Sigmoid colon (tissue), 7 donors: ENCODE measurements at regions of chr1 and their contacts with region 1.

Region 1: DNA sequence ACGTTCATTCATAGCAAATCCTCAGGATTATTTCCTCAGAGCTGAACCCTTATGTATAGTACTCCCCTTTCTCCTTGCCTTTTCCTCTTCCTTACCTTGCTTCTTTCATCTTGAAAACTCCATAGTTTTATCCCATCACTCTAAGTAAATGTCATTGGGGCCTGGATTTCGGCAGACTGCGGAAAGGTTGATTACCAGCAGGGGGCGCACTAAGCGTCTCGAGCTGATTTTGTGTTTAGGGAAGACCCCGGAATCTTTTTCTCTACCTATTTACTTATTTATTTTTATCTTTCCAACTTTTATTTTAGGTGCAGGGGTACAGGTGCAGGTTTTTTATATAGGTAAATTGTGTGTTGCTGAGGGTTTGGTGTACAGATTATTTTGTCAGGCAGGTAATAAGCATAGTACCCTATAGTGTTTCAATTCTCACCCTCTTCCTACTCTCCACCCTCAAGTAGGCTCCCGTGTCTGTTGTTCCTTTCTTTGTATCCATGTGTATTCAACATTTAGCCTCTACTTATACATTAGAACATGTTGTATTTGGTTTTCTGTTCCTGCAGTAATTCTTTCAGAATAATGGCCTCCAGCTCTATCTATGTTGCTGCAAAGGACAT is 11.4 kb upstream of the MTARC1 start:
- DNase-seq: no peak
- H3K4me3 ChIP-seq: no peak overlapping the region
- H3K27ac ChIP-seq: no peak overlapping the region
- H3K4me1 ChIP-seq: peaks cover 0 to 6% (median 0%) of the 10 kb centered on the region in 4 donors
- H3K27me3 ChIP-seq: no peaks in the 10 kb centered on the region
- CTCF ChIP-seq: peak in 3 of 4 experiments; percentile 68 to 78 (median 69)
- EP300 ChIP-seq: no peak
- POLR2A ChIP-seq: no peak

Region 2: DNA sequence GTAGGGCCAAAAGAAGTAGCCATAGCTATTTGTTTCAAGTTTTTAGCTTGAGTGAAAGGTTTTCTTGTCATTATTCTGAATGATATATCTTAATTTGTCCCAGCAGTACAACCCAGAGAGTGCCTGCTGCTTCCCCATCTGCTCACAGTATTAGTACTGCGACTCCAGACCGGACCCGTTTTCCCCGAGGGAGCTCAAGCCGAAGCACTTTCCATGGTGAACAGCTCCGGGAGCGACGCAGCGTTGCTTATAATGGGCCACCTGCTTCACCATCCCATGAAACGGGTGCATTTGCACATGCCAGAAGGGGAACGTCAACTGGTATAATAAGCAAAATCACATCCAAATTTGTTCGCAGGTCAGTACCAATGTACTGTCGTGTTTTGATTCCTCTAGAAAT is 122.4 kb before region 1 on chr1:
- intact Hi-C with region 1: no loop called
- DNase-seq: no peak
- H3K4me3 ChIP-seq: no peak overlapping the region
- H3K27ac ChIP-seq: no peak overlapping the region
- H3K4me1 ChIP-seq: no peaks in the 10 kb centered on the region
- H3K27me3 ChIP-seq: no peaks in the 10 kb centered on the region
- CTCF ChIP-seq: no peak
- EP300 ChIP-seq: no peak
- POLR2A ChIP-seq: no peak

Region 3: DNA sequence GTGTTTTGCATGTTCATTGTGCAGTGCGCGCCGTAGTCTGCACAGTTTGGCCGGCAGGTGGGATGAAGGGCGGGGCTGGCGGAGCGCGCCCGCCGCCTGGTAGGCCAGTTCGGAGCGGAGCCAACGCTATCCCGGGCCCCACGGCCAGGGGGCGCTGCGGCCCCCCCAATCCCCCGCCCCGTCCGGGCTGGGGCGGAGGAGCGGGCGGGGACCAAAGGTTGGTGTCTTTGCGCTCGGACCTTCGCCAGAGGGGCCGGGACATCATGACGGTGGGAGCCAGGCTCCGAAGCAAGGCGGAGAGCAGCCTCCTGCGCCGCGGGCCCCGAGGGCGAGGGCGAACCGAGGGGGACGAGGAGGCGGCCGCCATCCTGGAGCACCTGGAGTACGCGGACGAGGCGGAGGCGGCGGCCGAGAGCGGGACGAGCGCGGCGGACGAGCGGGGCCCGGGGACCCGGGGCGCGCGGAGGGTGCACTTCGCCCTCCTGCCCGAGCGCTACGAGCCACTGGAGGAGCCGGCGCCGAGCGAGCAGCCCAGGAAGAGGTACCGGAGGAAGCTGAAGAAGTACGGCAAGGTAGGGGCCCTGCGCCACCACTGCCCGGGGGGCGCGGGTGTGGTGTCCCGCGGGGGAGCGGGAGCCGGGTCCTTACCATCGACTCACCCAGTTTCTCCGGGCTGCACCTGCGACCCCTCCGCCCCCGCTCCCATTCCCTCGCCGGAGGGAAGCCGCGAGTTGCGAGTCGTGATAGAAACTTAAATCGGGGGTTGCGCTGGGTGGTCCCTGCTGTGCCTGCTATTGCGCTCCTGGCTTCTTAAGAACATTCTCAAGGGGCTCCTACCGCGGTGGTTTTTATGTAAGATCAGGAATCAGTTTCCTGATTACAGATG is 85.0 kb before region 1 on chr1 and contains the start of gene C1orf115:
- intact Hi-C with region 1: loop called (anchors 2 kb)
- DNase-seq: peak; percentile 87
- H3K4me3 ChIP-seq: peak within 1 kb of the TSS; percentile 55 to 89 (median 74)
- H3K27ac ChIP-seq: peak within 1 kb of the TSS; percentile 34 to 69 (median 56)
- H3K4me1 ChIP-seq: peaks cover 0 to 19% (median 15%) of the 10 kb centered on the region in 4 donors
- H3K27me3 ChIP-seq: no peaks in the 10 kb centered on the region
- CTCF ChIP-seq: peak; percentile 72 to 99 (median 87)
- EP300 ChIP-seq: no peak
- POLR2A ChIP-seq: no peak
- total RNA-seq, gene C1orf115: 3.9 to 8.9 (median 7.4) TPM

Region 4: GRCh38 chr1:220803401-220804201 is 28.3 kb after region 1 on chr1:
- intact Hi-C with region 1: loop called (anchors 2 kb)
- DNase-seq: no peak
- H3K4me3 ChIP-seq: no peak overlapping the region
- H3K27ac ChIP-seq: peak overlapping the region; percentile 75 to 81 (median 79)
- H3K4me1 ChIP-seq: peaks cover 0 to 37% (median 32%) of the 10 kb centered on the region in 4 donors
- H3K27me3 ChIP-seq: no peaks in the 10 kb centered on the region
- CTCF ChIP-seq: peak; percentile 40 to 84 (median 74)
- EP300 ChIP-seq: no peak
- POLR2A ChIP-seq: no peak